Transverse colon (tissue), 4 donors: ENCODE measurements at regions of chr22 and their contacts with region 1.

Region 1: DNA sequence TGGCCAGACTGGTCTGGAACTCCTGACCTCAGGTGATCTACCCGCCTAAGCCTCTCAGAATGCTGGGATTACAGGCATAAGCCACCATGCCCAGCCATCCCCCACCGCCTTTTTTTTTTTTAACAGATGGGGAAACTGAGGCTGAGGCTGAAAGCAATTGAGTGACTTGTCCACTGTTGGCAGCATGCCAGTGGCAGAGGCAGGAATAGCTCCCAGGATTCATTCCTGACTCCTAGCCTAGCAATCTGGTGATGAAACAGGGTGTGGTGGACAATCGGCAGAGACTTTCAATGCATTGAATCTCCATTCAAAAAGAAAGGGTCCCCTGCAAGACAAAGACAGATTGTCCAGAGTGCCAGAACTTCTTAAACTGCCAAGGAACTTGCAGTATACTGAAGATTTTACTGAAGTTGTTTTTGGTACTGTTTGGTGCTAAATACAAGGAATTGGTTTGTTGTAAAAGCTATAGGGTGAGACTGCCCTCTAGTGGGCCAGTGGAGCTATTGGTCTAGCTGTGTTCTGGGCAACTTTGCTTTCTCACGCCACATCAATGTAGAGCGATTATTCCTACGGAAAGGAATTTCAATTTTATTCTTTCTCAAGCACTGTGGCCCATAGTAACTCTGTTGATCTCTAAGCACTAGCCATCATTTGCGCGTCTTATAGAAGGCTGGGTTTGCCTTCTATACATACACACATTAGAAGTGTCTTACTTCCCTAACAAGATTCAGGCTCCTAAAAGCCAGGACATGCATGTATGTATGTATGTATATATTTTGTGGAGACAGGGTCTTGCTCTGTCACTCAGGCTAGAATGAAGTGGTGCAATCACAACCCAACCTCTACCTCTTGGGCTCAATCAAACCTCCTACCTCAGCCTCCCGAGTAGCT is 21.0 kb downstream of the C22orf31 start:
- DNase-seq: peak; percentile 66
- H3K4me3 ChIP-seq: no peak overlapping the region
- H3K27ac ChIP-seq: peak overlapping the region in 1 of 4 donors; percentile 22
- H3K4me1 ChIP-seq: peaks cover 7 to 34% (median 19%) of the 10 kb centered on the region in 4 donors
- H3K27me3 ChIP-seq: no peaks in the 10 kb centered on the region
- CTCF ChIP-seq: peak; percentile 92 to 98 (median 96)
- EP300 ChIP-seq: no peak
- POLR2A ChIP-seq: no peak

Region 2: GRCh38 chr22:28051787-28052356 is 988.8 kb before region 1 on chr22:
- in situ Hi-C with region 1: loop called in 1 of 4 experiments (anchors 25 kb)
- intact Hi-C with region 1: no loop called
- DNase-seq: peak; percentile 67
- H3K4me3 ChIP-seq: no peak overlapping the region
- H3K27ac ChIP-seq: no peak overlapping the region
- H3K4me1 ChIP-seq: no peaks in the 10 kb centered on the region
- H3K27me3 ChIP-seq: no peaks in the 10 kb centered on the region
- CTCF ChIP-seq: peak; percentile 78 to 81 (median 80)
- EP300 ChIP-seq: no peak
- POLR2A ChIP-seq: no peak

Region 3: DNA sequence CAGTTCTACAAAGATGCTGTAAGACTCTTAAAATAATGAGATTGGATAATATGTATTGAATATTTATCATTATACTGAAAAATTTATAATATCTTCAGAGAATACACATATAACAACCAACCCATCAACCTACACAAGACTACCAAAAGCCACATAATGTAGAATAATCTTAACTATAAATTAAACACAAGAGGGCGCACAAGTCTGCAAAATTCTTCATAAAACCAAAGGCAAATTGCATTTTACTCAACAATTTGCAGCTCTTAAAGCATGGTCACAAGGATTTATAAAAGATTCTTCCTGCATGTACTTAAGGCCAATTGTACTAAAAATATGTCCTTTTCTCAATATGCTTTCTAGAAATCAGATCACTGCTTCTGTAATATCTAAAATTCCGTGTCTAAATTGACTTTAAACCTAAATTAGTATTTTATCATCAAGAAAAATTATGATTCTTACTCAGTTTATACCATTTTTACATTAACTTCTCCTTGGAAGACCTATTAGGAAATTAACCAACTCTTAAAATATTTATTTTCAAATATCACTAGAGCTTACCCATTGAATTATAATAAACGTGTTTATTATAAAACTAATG is 440.0 kb before region 1 on chr22:
- in situ Hi-C with region 1: loop called in 3 of 4 experiments (anchors 25 kb)
- intact Hi-C with region 1: no loop called
- DNase-seq: no peak
- H3K4me3 ChIP-seq: no peak overlapping the region
- H3K27ac ChIP-seq: no peak overlapping the region
- H3K4me1 ChIP-seq: no peaks in the 10 kb centered on the region
- H3K27me3 ChIP-seq: no peaks in the 10 kb centered on the region
- CTCF ChIP-seq: peak; percentile 48 to 62 (median 59)
- EP300 ChIP-seq: no peak
- POLR2A ChIP-seq: no peak

Region 4: GRCh38 chr22:28855355-28856094 is 185.1 kb before region 1 on chr22:
- in situ Hi-C with region 1: loop called (anchors 5 to 10 kb)
- intact Hi-C with region 1: loop called (anchors 1 kb)
- DNase-seq: peak; percentile 43
- H3K4me3 ChIP-seq: no peak overlapping the region
- H3K27ac ChIP-seq: no peak overlapping the region
- H3K4me1 ChIP-seq: peaks cover 0 to 9% (median 2%) of the 10 kb centered on the region in 4 donors
- H3K27me3 ChIP-seq: no peaks in the 10 kb centered on the region
- CTCF ChIP-seq: peak; percentile 87 to 96 (median 93)
- EP300 ChIP-seq: no peak
- POLR2A ChIP-seq: no peak

Region 5: DNA sequence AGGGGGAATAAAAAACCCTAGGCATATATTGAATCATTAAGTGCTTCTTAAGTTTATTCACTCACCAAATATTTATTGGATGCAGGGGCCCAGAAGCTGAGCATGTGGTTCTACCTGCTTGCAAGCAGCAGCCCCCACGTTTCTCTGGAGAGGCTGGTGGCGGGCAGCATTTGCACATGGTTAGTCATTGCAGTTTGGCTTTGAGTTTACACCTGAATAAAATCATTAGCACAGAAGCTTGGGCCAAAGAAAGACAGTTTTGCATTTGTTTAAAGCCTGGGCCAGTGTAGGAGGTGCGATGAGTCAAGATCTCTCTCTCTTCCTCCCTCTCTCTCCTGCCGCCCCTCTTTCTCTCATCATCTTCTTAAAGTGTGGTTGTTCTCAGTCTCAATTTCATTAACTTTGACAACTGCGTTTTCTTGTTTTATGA is 51.6 kb before region 1 on chr22:
- in situ Hi-C with region 1: no loop called
- intact Hi-C with region 1: no loop called
- DNase-seq: no peak
- H3K4me3 ChIP-seq: no peak overlapping the region
- H3K27ac ChIP-seq: peak overlapping the region in 1 of 4 donors; percentile 3
- H3K4me1 ChIP-seq: peaks cover 0 to 2% (median 0%) of the 10 kb centered on the region in 4 donors
- H3K27me3 ChIP-seq: no peaks in the 10 kb centered on the region
- CTCF ChIP-seq: no peak
- EP300 ChIP-seq: no peak
- POLR2A ChIP-seq: no peak